MCF 10A (cell line): ENCODE measurements at regions of chr1 and their contacts with region 1.

Region 1: DNA sequence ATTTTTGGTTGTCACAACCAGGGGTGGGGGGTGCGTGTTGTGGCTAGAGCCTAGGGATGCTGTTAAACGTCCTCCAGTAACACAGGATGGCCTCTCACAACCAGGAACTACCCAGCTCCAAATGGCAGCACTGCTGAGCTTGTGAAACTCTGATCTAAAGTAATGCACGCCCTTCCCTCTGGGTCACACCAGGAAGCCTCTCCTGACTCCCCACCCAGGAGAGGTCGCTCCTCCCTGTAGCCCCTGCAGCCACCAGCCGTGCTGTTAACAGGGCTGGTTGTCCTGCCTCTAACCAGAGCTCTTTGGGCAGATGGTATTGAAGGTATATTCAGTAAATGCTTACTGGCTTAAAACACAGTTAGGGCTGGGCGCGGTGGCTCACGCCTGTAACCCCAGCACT is 73.2 kb downstream of the NKAIN1 start:
- DNase-seq: no peak
- H3K4me3 Mint-ChIP-seq: no peak overlapping the region
- H3K27ac Mint-ChIP-seq: no peak overlapping the region
- H3K4me1 Mint-ChIP-seq: peaks cover 14% of the 10 kb centered on the region
- H3K27me3 Mint-ChIP-seq: no peaks in the 10 kb centered on the region
- CTCF ChIP-seq: no peak

Region 2: GRCh38 chr1:31155216-31155841 is 11.1 kb before region 1 on chr1:
- CTCF ChIA-PET with region 1: interaction called, 3 read pairs
- POLR2A ChIA-PET with region 1: interaction called, 10 read pairs
- intact Hi-C with region 1: no loop called
- DNase-seq: peak; percentile 72
- H3K4me3 Mint-ChIP-seq: peak overlapping the region; percentile 82
- H3K27ac Mint-ChIP-seq: peak overlapping the region; percentile 95
- H3K4me1 Mint-ChIP-seq: peaks cover 20% of the 10 kb centered on the region
- H3K27me3 Mint-ChIP-seq: no peaks in the 10 kb centered on the region
- CTCF ChIP-seq: peak; percentile 36

Region 3: GRCh38 chr1:31335007-31335406 is 168.5 kb after region 1 on chr1:
- CTCF ChIA-PET with region 1: interaction called, 8 read pairs
- POLR2A ChIA-PET with region 1: no interaction called
- intact Hi-C with region 1: loop called (anchors 1 kb)
- DNase-seq: peak; percentile 51
- H3K4me3 Mint-ChIP-seq: no peak overlapping the region
- H3K27ac Mint-ChIP-seq: no peak overlapping the region
- H3K4me1 Mint-ChIP-seq: no peaks in the 10 kb centered on the region
- H3K27me3 Mint-ChIP-seq: no peaks in the 10 kb centered on the region
- CTCF ChIP-seq: peak; percentile 57